Testis (tissue), 5 donors: ENCODE measurements at regions of chr1 and their contacts with region 1.

Region 1: GRCh38 chr1:116485071-116485735 is 85.6 kb downstream of the CD58 start:
- DNase-seq: peak; percentile 94
- H3K4me3 ChIP-seq: no peak overlapping the region
- H3K27ac ChIP-seq: peak overlapping the region in 1 of 2 donors; percentile 50
- H3K4me1 ChIP-seq: peaks cover 43% of the 10 kb centered on the region
- H3K27me3 ChIP-seq: no peaks in the 10 kb centered on the region
- CTCF ChIP-seq: peak; percentile 83 to 91 (median 90)
- POLR2A ChIP-seq: no peak

Region 2: GRCh38 chr1:116139592-116140134 is 345.5 kb before region 1 on chr1:
- intact Hi-C with region 1: loop called (anchors 5 kb)
- DNase-seq: no peak
- H3K4me3 ChIP-seq: no peak overlapping the region
- H3K27ac ChIP-seq: no peak overlapping the region
- H3K4me1 ChIP-seq: no peaks in the 10 kb centered on the region
- H3K27me3 ChIP-seq: no peaks in the 10 kb centered on the region
- CTCF ChIP-seq: no peak
- POLR2A ChIP-seq: no peak